ENCODE measurements at regions of chr9 and their contacts with region 1.

Region 1: GRCh38 chr9:95510709-95511615 is 5.8 kb downstream of the PTCH1 start:
- DNase-seq: peak; percentile 83 to 94 (median 86)
- ATAC-seq: peak; percentile 76
- H3K4me3 ChIP-seq: peak overlapping the region; percentile 84
- H3K27ac ChIP-seq: peak overlapping the region; percentile 97
- H3K4me1 ChIP-seq: peaks cover 17 to 47% of the 10 kb centered on the region in 2 experiments; a peak in 4 of 5 replicates
- H3K27me3 ChIP-seq: no peaks in the 10 kb centered on the region
- CTCF ChIP-seq: no peak
- EP300 ChIP-seq: no peak
- POLR2A ChIP-seq: peak; percentile 77
- RAD21 ChIP-seq: no peak

Region 2: GRCh38 chr9:95317119-95317892 is 193.7 kb before region 1 on chr9 and contains the start of gene FANCC:
- CTCF ChIA-PET with region 1: no interaction called
- POLR2A ChIA-PET with region 1: no interaction called
- in situ Hi-C with region 1: no loop called
- intact Hi-C with region 1: loop called (anchors 2 kb)
- DNase-seq: peak; percentile 91 to 95 (median 94)
- ATAC-seq: peak; percentile 91
- H3K4me3 ChIP-seq: peak within 1 kb of the TSS; percentile 89
- H3K27ac ChIP-seq: peak within 1 kb of the TSS; percentile 100
- H3K4me1 ChIP-seq: peaks cover 11 to 17% of the 10 kb centered on the region in 2 experiments; a peak in 4 of 5 replicates
- H3K27me3 ChIP-seq: no peaks in the 10 kb centered on the region; a peak in 1 of 5 replicates
- CTCF ChIP-seq: no peak
- EP300 ChIP-seq: no peak
- POLR2A ChIP-seq: peak; percentile 91
- RAD21 ChIP-seq: 0 out of 4 replicates have a peak, but pooled peaks of 1 of the 2 experiments have one; percentile 7
- polyA plus RNA-seq, gene FANCC: 4.6 to 5.7 TPM

Region 3: DNA sequence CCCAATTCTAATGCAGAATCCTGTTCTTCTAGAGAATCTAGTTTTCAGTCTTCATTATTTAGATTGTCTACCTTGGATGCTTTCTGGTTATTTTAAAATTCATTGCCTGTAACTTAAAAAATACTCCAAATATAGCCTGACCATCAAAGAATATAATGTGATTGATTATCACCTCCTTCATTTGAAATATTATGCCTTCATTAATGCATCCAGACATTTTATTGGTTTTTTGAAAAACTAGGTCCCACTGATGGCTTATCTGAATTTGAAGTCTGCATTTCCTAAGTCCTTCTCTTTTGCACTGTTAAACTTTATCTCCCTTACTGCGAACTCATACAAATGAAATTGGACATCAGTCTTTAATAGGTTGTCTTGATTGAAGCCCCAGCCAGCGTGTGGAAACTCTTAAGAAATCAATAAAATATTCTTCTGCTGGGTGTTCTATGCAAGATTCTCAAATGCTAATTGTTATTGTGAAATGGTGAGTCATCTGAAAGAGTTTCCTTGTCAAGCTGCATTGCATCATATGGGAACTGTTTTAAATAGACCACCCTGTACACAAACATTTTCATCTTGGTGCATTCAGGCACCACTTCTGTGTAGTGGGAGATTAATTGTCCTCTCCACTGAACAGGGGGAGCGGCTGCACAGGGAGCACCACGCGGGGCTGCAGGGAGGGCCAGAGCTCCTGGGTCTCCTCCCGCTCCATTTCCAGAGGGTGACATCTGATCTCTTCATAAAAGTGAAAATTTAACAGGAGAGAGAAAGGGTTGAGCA is 101.1 kb before region 1 on chr9:
- CTCF ChIA-PET with region 1: no interaction called
- POLR2A ChIA-PET with region 1: no interaction called
- in situ Hi-C with region 1: no loop called
- intact Hi-C with region 1: loop called (anchors 5 kb)
- DNase-seq: peak in 2 of 4 experiments; percentile 22 to 29
- ATAC-seq: peak; percentile 28; the same call in 2 of the 3 replicates
- H3K4me3 ChIP-seq: no peak overlapping the region
- H3K27ac ChIP-seq: 0 out of 3 replicates have a peak overlapping the region, but pooled peaks have one; percentile 21
- H3K4me1 ChIP-seq: peaks cover 15 to 25% of the 10 kb centered on the region in 2 experiments; a peak in 4 of 5 replicates
- H3K27me3 ChIP-seq: 0 out of 5 replicates have a peak, but pooled peaks cover 0 to 3% of the 10 kb centered on the region in 2 experiments
- CTCF ChIP-seq: no peak
- EP300 ChIP-seq: peak; percentile 26; the same call in 1 of the 2 replicates
- POLR2A ChIP-seq: no peak
- RAD21 ChIP-seq: no peak

Region 4: DNA sequence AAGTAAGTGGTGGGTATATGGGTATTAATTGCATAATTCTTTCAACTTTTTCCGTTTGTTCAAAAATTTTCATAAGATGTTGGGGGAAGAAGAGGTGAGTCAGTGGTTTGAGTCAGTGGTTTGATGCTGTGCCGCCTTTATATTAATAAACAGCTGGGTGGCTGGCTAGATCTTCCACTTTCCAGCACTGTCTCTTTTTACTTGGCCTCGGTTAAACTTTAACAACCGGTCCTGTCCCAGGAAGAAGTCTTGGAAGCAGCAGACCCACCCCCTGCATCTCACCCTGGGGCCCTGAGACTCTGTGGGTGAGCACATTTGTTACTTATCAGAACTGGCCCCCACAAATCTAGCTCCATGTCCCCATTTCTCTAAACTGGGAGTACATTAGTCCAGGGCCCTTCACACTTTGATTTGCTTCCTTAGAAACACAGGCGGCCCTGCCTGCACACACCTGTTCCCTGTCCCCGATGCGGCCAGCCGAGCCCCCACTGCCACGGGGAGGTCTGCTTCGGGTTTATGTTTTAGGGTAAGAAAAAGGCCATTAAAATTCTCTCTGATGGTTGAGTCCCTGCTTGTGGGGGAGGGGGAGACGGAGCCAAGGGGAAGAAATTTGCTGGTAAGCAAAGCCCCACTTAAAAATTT is 84.9 kb before region 1 on chr9:
- CTCF ChIA-PET with region 1: no interaction called
- POLR2A ChIA-PET with region 1: no interaction called
- in situ Hi-C with region 1: no loop called
- intact Hi-C with region 1: loop called (anchors 2 kb)
- DNase-seq: peak; percentile 29 to 40 (median 32)
- ATAC-seq: peak; percentile 51
- H3K4me3 ChIP-seq: peak overlapping the region; percentile 55
- H3K27ac ChIP-seq: peak overlapping the region; percentile 85
- H3K4me1 ChIP-seq: peaks cover 0 to 6% of the 10 kb centered on the region in 2 experiments; a peak in 2 of 5 replicates
- H3K27me3 ChIP-seq: no peaks in the 10 kb centered on the region
- CTCF ChIP-seq: no peak
- EP300 ChIP-seq: no peak
- POLR2A ChIP-seq: no peak
- RAD21 ChIP-seq: no peak

Region 5: GRCh38 chr9:95434116-95435073 is 76.6 kb before region 1 on chr9:
- CTCF ChIA-PET with region 1: no interaction called
- POLR2A ChIA-PET with region 1: no interaction called
- in situ Hi-C with region 1: no loop called
- intact Hi-C with region 1: loop called (anchors 2 kb)
- DNase-seq: peak; percentile 91 to 93 (median 91)
- ATAC-seq: peak; percentile 98
- H3K4me3 ChIP-seq: peak overlapping the region; percentile 18
- H3K27ac ChIP-seq: peak overlapping the region; percentile 47
- H3K4me1 ChIP-seq: peaks cover 11 to 17% of the 10 kb centered on the region in 2 experiments; a peak in 4 of 5 replicates
- H3K27me3 ChIP-seq: no peaks in the 10 kb centered on the region
- CTCF ChIP-seq: no peak
- EP300 ChIP-seq: peak; percentile 72
- POLR2A ChIP-seq: peak; percentile 53; the same call in 1 of the 2 replicates
- RAD21 ChIP-seq: no peak